ENCODE measurements at regions of chr17 and their contacts with region 1.

Region 1: GRCh38 chr17:43377056-43377810 is 21.6 kb upstream of the ARL4D start:
- DNase-seq: no peak
- CTCF ChIP-seq: no peak

Region 2: GRCh38 chr17:43393944-43394482 is 16.8 kb after region 1 on chr17:
- CTCF ChIA-PET with region 1: interaction called, 11 read pairs
- POLR2A ChIA-PET with region 1: no interaction called
- DNase-seq: peak; percentile 86
- CTCF ChIP-seq: peak; percentile 83